CD14-positive monocyte (primary cell): ENCODE measurements at regions of chr2 and their contacts with region 1.

Region 1: GRCh38 chr2:239991689-239992314 is 33.3 kb downstream of the NDUFA10 start:
- DNase-seq: peak; percentile 37 to 74 (median 49)
- H3K4me3 ChIP-seq: no peak overlapping the region
- H3K4me3 Mint-ChIP-seq: no peak overlapping the region
- H3K27ac ChIP-seq: no peak overlapping the region
- H3K27ac Mint-ChIP-seq: no peak overlapping the region
- H3K4me1 ChIP-seq: no peaks in the 10 kb centered on the region
- H3K4me1 Mint-ChIP-seq: no peaks in the 10 kb centered on the region
- H3K27me3 ChIP-seq: no peaks in the 10 kb centered on the region
- H3K27me3 Mint-ChIP-seq: no peaks in the 10 kb centered on the region
- CTCF ChIP-seq: peak; percentile 85

Region 2: DNA sequence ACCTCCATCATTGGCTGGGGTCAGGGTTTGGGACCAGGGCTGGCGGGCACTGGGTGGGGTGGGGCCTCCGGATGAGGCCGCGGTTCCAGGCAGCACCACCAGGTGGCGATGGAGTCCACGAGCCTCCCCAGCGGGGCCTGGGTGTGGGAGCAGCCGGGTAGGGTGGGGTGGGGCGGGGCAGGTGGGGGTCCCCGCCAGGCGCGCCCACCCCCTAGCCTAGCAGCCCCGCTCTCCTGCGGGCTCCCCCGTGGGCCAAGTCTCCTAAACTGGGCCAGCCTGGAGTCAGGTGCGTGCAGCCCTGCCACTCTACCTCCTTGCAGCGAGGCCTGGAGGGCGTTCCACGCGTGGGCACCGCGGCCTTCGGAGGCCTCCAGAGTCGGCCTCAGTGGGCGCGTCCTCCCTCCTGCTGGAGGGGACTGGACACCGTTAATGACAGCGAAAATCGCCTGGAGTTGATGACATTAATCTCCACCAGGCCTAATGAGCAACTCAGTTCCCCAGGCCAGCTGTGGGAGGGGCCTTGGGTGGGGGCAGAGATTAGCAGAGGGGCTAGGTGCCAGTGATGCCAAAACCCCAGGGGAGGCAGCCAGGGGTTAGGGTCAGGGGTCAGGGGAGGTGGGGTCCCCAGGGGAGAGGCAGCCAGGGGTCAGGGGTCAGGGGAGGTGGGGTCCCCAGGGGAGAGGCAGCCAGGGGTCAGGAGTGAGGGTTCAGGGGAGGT is 956.3 kb before region 1 on chr2:
- intact Hi-C with region 1: loop called (anchors 5 kb)
- DNase-seq: peak; percentile 21 to 40 (median 34)
- H3K4me3 ChIP-seq: no peak overlapping the region
- H3K4me3 Mint-ChIP-seq: no peak overlapping the region
- H3K27ac ChIP-seq: no peak overlapping the region
- H3K27ac Mint-ChIP-seq: no peak overlapping the region
- H3K4me1 ChIP-seq: no peaks in the 10 kb centered on the region
- H3K4me1 Mint-ChIP-seq: no peaks in the 10 kb centered on the region
- H3K27me3 ChIP-seq: peaks cover 0 to 15% of the 10 kb centered on the region in 2 donors
- H3K27me3 Mint-ChIP-seq: peaks cover 3 to 28% (median 17%) of the 10 kb centered on the region in 3 donors
- CTCF ChIP-seq: peak; percentile 96

Region 3: GRCh38 chr2:239143858-239144718 is 847.7 kb before region 1 on chr2:
- intact Hi-C with region 1: loop called in 1 of 2 experiments (anchors 5 kb)
- DNase-seq: peak; percentile 6 to 21 (median 10)
- H3K4me3 ChIP-seq: no peak overlapping the region
- H3K4me3 Mint-ChIP-seq: no peak overlapping the region
- H3K27ac ChIP-seq: peak overlapping the region in 1 of 2 donors; percentile 65
- H3K27ac Mint-ChIP-seq: peak overlapping the region in 4 of 7 donors; percentile 20 to 75 (median 50)
- H3K4me1 ChIP-seq: no peaks in the 10 kb centered on the region
- H3K4me1 Mint-ChIP-seq: no peaks in the 10 kb centered on the region
- H3K27me3 ChIP-seq: no peaks in the 10 kb centered on the region
- H3K27me3 Mint-ChIP-seq: peaks cover 0 to 1% (median 0%) of the 10 kb centered on the region in 3 donors
- CTCF ChIP-seq: peak; percentile 72

Region 4: DNA sequence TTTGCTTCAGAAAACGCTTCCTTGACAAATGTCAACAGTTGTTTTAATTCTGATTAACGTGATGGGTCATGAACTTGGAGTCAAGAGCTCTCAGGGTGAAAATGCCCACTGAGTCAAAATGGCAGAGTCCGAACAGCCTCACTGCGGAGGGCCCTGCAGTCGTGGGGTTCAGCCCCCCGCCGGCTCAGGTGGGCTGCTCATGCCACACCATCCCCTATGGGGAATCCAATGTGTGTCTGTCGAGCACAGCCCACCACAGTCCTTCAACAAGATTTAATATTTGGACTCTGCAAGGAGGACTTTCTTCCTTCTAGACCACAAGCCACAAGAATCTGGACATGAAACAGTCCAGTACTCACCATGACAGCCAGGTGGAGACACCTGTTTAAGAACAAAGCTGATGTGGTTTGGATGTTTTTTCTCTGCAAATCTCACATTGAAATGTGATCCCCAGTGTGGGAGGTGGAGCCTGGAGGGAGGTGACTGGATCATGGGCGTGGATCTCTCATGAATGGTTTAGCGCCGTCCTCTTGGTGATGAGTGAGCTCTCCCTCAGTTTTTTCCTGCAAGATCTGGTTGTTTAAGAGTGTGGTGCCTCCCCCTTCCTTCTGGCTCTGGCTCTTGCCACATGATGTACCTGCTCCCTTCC is 167.6 kb before region 1 on chr2:
- intact Hi-C with region 1: loop called in 1 of 2 experiments (anchors 10 kb)
- DNase-seq: peak in 2 of 3 donors; percentile 4 to 10
- H3K4me3 ChIP-seq: no peak overlapping the region
- H3K4me3 Mint-ChIP-seq: peak overlapping the region in 1 of 2 donors; percentile 40
- H3K27ac ChIP-seq: no peak overlapping the region
- H3K27ac Mint-ChIP-seq: no peak overlapping the region
- H3K4me1 ChIP-seq: no peaks in the 10 kb centered on the region
- H3K4me1 Mint-ChIP-seq: peaks cover 5% of the 10 kb centered on the region
- H3K27me3 ChIP-seq: no peaks in the 10 kb centered on the region
- H3K27me3 Mint-ChIP-seq: peaks cover 17 to 23% (median 21%) of the 10 kb centered on the region in 3 donors
- CTCF ChIP-seq: peak; percentile 7

Region 5: GRCh38 chr2:239889641-239890121 is 102.1 kb before region 1 on chr2:
- intact Hi-C with region 1: loop called (anchors 5 kb)
- DNase-seq: no peak
- H3K4me3 ChIP-seq: no peak overlapping the region
- H3K4me3 Mint-ChIP-seq: peak overlapping the region in 1 of 2 donors; percentile 34
- H3K27ac ChIP-seq: no peak overlapping the region
- H3K27ac Mint-ChIP-seq: no peak overlapping the region
- H3K4me1 ChIP-seq: peaks cover 15 to 17% of the 10 kb centered on the region in 2 donors
- H3K4me1 Mint-ChIP-seq: peaks cover 26% of the 10 kb centered on the region
- H3K27me3 ChIP-seq: no peaks in the 10 kb centered on the region
- H3K27me3 Mint-ChIP-seq: peaks cover 5 to 16% (median 12%) of the 10 kb centered on the region in 3 donors
- CTCF ChIP-seq: no peak

Region 6: GRCh38 chr2:239934571-239935171 is 57.1 kb before region 1 on chr2:
- intact Hi-C with region 1: loop called in 1 of 2 experiments (anchors 2 kb)
- DNase-seq: peak; percentile 80 to 83 (median 83)
- H3K4me3 ChIP-seq: no peak overlapping the region
- H3K4me3 Mint-ChIP-seq: peak overlapping the region; percentile 27 to 79
- H3K27ac ChIP-seq: no peak overlapping the region
- H3K27ac Mint-ChIP-seq: peak overlapping the region; percentile 64 to 83 (median 81)
- H3K4me1 ChIP-seq: peaks cover 38 to 55% of the 10 kb centered on the region in 2 donors
- H3K4me1 Mint-ChIP-seq: peaks cover 49% of the 10 kb centered on the region
- H3K27me3 ChIP-seq: no peaks in the 10 kb centered on the region
- H3K27me3 Mint-ChIP-seq: peaks cover 0 to 7% (median 3%) of the 10 kb centered on the region in 3 donors
- CTCF ChIP-seq: peak; percentile 91

Region 7: GRCh38 chr2:239944694-239945551 is 46.9 kb before region 1 on chr2:
- intact Hi-C with region 1: loop called in 1 of 2 experiments (anchors 5 kb)
- DNase-seq: peak; percentile 84 to 87 (median 85)
- H3K4me3 ChIP-seq: peak overlapping the region in 1 of 3 experiments; percentile 64
- H3K4me3 Mint-ChIP-seq: peak overlapping the region; percentile 73 to 89
- H3K27ac ChIP-seq: peak overlapping the region; percentile 69 to 93
- H3K27ac Mint-ChIP-seq: peak overlapping the region; percentile 85 to 91 (median 88)
- H3K4me1 ChIP-seq: peaks cover 22 to 25% of the 10 kb centered on the region in 2 donors
- H3K4me1 Mint-ChIP-seq: peaks cover 25% of the 10 kb centered on the region
- H3K27me3 ChIP-seq: no peaks in the 10 kb centered on the region
- H3K27me3 Mint-ChIP-seq: peaks cover 0 to 3% (median 2%) of the 10 kb centered on the region in 3 donors
- CTCF ChIP-seq: no peak